Ascending aorta (tissue), 2 donors: ENCODE measurements at regions of chr15 and their contacts with region 1.

Region 1: DNA sequence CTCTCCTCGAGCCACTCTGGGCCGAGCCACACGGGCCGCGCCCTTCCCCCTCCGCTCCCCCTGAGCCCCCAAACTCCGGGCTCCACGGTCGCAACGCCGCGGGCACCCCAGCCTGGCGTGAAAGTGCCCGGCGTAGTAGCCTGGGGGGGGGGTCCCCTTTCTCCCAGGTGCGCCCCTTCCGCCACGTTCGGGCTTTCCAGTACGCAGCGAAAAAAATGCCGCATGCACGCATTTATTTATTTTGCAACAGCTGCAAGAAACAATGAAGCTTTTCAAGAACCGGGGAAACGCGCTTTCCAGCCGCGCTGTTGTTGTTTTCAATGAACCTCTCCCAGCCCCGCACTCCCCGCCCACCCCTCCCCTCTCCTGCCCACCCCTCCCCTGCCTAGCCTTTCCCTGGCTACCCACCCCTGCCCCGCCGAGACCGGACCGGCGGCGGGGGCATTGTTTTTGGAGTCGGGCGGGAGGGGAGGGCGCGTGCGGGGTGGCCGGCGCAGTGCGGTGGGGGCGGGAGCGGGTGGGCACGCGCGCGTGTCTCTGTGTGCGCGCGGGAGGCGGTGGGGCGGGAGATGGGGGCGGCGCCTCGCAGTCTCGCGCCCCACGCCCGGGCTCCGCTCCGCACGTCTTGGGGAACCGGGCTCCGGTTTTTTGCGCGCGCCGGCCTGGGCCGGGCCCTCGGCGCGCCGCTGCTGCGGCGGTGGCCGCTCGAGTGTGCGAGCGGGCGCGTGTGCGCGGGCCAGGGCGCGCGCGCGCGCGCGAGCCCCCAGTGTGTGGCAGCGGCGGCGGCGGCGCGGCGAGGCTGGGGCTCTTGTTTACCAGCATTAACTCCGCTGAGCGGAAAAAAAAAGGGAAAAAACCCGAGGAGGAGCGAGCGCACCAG is at the start of gene IGF1R:
- DNase-seq: peak; percentile 46 to 93
- H3K4me3 ChIP-seq: peak within 1 kb of the TSS; percentile 94 to 100
- H3K27ac ChIP-seq: peak within 1 kb of the TSS; percentile 93 to 98
- H3K4me1 ChIP-seq: no peaks in the 10 kb centered on the region
- H3K27me3 ChIP-seq: no peaks in the 10 kb centered on the region
- CTCF ChIP-seq: peak in 2 of 3 experiments; percentile 10 to 33
- total RNA-seq, gene IGF1R: 151 TPM

Region 2: GRCh38 chr15:98442379-98442833 is 205.6 kb before region 1 on chr15:
- intact Hi-C with region 1: loop called (anchors 2 kb)
- DNase-seq: peak in 1 of 2 donors; percentile 79
- H3K4me3 ChIP-seq: no peak overlapping the region
- H3K27ac ChIP-seq: no peak overlapping the region
- H3K4me1 ChIP-seq: no peaks in the 10 kb centered on the region
- H3K27me3 ChIP-seq: no peaks in the 10 kb centered on the region
- CTCF ChIP-seq: peak; percentile 68 to 90 (median 79)

Region 3: DNA sequence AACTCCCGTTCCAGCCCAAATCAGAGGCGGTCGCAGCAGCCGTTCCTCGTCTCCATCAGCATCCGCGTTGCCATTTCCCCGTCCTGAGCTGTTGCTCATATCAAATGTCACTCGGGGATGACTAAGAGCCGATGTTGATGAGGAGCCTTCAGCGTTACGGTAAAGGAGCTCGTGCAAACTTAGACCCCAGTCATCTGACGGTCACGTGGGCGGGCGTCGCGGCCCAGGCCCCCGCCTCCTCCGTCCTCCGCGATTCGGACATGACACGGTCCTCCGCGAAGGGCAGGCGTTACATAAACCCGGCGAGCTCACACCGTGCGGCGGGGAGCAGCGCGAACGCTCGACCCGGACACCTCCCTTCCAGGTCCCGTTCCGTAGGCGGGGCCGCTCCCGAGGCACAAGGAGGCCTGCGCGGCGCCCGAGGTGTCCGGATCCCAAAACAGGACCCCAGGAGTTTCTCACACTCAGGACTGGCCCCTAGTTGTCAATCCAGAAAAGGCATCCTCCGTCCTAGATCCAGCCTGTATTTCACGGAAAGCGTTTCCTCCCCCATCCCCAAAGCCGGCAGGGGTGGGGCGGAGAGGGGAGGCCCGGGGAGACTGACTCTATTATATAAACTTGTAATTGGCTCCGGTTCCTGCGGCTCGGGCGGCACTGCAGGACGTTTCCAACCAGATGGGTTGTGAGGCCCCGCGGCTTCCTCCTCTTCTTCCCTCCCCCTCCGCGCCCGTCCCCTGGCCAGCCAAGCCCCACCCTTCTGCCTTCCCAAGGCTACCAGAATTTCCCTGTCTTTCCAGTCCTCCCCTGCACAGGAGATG is 99.7 kb before region 1 on chr15:
- intact Hi-C with region 1: loop called (anchors 1 kb)
- DNase-seq: peak; percentile 65 to 87
- H3K4me3 ChIP-seq: peak overlapping the region; percentile 57 to 72
- H3K27ac ChIP-seq: peak overlapping the region; percentile 67 to 86
- H3K4me1 ChIP-seq: peaks cover 0 to 4% of the 10 kb centered on the region in 2 donors
- H3K27me3 ChIP-seq: no peaks in the 10 kb centered on the region
- CTCF ChIP-seq: peak in 1 of 3 experiments; percentile 31

Region 4: GRCh38 chr15:98568382-98569017 is 79.5 kb before region 1 on chr15:
- intact Hi-C with region 1: no loop called
- DNase-seq: no peak
- H3K4me3 ChIP-seq: no peak overlapping the region
- H3K27ac ChIP-seq: no peak overlapping the region
- H3K4me1 ChIP-seq: no peaks in the 10 kb centered on the region
- H3K27me3 ChIP-seq: no peaks in the 10 kb centered on the region
- CTCF ChIP-seq: peak in 2 of 3 experiments; percentile 10 to 18

Region 5: DNA sequence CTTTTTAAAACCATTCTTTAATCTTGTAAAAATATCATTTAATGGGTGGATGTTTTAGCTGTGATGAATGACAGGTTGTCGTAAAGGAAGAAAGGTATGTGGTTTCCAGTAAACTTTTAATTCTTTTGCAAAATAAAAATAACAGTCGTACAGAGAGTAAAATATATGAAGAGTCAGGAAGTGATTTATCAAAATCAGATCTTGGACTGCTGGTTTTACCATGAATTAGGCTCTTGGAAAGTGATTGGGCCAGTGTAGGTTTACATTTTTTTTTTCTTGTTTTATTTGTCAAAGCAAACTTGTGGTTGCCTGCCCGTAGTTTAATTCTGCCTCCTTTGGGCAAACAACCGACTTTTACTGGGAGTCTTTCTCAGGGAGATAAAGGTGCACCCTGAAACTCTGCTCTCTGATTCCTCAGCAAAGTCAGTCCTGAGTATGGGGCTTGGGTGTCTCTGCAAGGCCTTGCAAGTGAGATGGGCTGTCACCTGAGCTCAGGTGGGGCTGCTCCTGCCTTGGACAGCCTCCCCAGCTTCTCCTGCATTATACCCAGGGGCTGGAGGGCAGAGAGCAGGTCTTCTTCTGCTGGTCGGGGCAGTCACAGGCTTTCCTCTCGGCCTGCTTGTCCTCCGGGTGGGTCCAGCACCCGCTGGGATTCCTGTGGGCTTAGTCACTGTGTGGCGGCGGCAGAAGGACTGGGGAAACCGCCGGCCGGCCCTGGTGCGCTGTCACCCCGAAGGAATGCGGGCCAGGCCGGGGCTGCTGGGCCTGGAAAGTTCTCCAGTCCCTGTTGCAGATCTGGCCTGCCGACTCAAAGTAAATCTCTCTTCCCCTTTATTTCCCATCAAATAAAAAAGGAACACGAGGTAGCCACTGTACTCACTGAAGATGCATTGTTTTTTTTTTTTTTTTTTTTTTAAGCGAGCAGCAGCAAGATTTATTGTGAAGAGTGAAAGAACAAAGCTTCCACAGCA is 79.4 kb after region 1 on chr15:
- intact Hi-C with region 1: loop called (anchors 5 kb)
- DNase-seq: peak; percentile 65 to 95
- H3K4me3 ChIP-seq: peak overlapping the region in 1 of 2 donors; percentile 16
- H3K27ac ChIP-seq: peak overlapping the region; percentile 95 to 97
- H3K4me1 ChIP-seq: peaks cover 30 to 74% of the 10 kb centered on the region in 2 donors
- H3K27me3 ChIP-seq: no peaks in the 10 kb centered on the region
- CTCF ChIP-seq: no peak

Region 6: GRCh38 chr15:98779463-98780071 is 131.6 kb after region 1 on chr15:
- intact Hi-C with region 1: loop called (anchors 5 kb)
- DNase-seq: peak in 1 of 2 donors; percentile 81
- H3K4me3 ChIP-seq: no peak overlapping the region
- H3K27ac ChIP-seq: peak overlapping the region; percentile 9 to 42
- H3K4me1 ChIP-seq: peaks cover 6 to 36% of the 10 kb centered on the region in 2 donors
- H3K27me3 ChIP-seq: no peaks in the 10 kb centered on the region
- CTCF ChIP-seq: peak; percentile 77 to 89 (median 87)

Region 7: GRCh38 chr15:99059010-99059981 is 411.3 kb after region 1 on chr15:
- intact Hi-C with region 1: loop called (anchors 1 kb)
- DNase-seq: peak; percentile 58 to 93
- H3K4me3 ChIP-seq: peak overlapping the region; percentile 68 to 83
- H3K27ac ChIP-seq: peak overlapping the region; percentile 87 to 88
- H3K4me1 ChIP-seq: peaks cover 6 to 8% of the 10 kb centered on the region in 2 donors
- H3K27me3 ChIP-seq: no peaks in the 10 kb centered on the region
- CTCF ChIP-seq: peak; percentile 31 to 91 (median 59)